Cardiac septum (tissue), 1 donor: ENCODE measurements at regions of chr4 and their contacts with region 1.

Region 1: GRCh38 chr4:78864405-78865024 is 74.7 kb downstream of the PAQR3 start:
- DNase-seq: no peak

Region 2: GRCh38 chr4:78634011-78634664 is 230.4 kb before region 1 on chr4:
- intact Hi-C with region 1: loop called (anchors 5 kb)
- DNase-seq: no peak

Region 3: GRCh38 chr4:78775303-78776030 is 89.0 kb before region 1 on chr4:
- intact Hi-C with region 1: loop called (anchors 5 kb)
- DNase-seq: peak; percentile 94

Region 4: DNA sequence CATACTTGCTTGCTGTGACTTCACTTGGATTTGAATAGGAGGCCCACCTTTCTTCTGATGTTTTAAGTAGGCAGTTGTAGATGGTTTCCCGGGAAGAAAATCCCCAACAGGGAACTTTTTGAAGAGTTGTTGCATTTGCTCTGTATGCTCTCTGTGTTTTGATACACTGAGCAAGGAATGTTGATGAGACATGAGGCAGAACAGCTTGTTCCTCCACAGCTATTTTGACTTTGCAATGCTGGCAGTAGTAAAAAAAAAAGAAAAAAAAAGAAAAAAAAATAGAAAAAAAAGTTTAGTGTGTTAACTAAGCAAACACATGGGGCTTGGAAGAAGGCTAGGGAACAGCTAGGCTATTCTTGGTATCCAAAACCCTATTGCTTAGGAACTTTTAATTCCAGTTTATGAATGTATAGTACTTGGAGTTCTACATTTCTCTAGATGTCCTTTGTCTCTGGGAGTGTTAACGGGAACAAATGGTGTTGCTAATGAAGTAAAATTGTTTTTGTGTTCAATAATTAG is 98.1 kb after region 1 on chr4:
- intact Hi-C with region 1: no loop called
- DNase-seq: no peak

Region 5: GRCh38 chr4:79325864-79326328 is 461.4 kb after region 1 on chr4 and contains the start of gene NAA11:
- intact Hi-C with region 1: no loop called
- DNase-seq: no peak
- total RNA-seq, gene NAA11: not detected